Sigmoid colon (tissue), 7 donors: ENCODE measurements at regions of chr19 and their contacts with region 1.

Region 1: DNA sequence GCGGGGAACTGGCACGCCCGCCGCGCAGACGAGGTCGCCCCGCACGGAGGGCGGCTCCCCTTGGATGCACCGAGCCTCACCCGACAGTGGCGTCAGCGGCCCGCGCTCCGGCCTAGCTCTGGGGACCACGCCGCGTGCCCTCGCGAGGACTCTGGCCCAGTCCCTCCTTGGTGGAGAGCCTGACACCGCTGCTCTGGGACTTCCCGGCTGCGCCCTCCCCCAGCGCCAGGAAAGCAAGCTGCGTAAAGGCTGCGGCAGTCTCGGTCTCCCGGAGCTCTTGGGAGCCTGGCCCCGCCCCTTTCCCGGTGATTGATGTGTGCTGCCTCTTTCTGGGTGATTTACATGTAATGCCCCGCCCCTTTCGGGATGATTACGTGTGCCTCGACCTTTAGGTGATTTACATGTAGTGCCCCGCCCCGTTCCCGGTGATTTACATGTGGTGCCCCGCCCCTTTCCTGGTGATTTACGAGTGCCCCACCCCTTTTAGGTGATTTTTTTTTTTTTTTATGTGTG is at the start of gene LENG9:
- DNase-seq: peak; percentile 99
- H3K4me3 ChIP-seq: peak within 1 kb of the TSS; percentile 42 to 63 (median 60)
- H3K27ac ChIP-seq: peak within 1 kb of the TSS; percentile 89 to 94 (median 91)
- H3K4me1 ChIP-seq: peaks cover 0 to 48% (median 40%) of the 10 kb centered on the region in 4 donors
- H3K27me3 ChIP-seq: no peaks in the 10 kb centered on the region
- CTCF ChIP-seq: no peak
- EP300 ChIP-seq: no peak
- POLR2A ChIP-seq: peak; percentile 58 to 87
- total RNA-seq, gene LENG9: 2.5 to 7.8 (median 3.6) TPM

Region 2: DNA sequence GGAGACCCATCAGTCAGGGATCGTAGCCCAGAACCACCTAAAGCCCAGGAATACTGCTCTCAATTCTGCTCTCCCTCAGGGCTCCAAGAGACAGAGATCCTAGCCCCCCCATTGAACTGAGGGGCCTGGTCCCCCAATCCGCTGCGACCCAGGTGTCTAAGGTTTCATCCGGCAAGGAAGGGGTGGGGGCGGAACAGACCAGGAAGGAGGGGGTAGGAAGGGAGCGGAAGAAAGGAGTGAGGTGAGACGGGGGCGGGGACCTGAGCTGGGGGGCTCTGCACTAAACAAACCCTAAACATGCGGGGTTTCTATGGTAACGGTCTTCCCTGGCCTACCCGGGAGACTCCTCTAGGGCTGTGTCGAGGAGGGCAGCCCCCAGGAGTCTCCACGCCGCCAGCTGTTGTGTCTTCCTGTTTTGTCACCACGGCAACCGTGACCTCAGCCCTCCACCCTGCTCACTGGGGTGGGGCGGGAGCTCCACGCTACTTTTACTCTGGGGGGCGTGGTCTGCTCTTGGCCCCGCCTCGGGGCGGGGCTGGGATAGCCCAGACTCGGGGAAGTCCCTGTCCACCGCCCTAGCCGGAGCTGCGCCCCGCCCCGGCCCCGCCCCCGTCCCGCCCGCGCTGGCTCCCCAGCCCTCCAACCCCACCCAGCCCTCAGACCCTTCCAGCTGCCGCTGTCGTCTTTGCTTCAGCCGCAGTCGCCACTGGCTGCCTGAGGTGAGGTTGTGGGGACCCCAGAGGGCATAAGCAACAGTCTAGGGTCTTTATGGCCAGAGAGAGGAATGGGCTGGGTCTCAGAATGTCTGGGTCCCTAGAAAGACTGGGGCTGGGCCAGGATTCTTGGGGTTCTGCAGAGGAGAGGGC is 596.1 kb before region 1 on chr19 and contains the start of gene MYADM:
- intact Hi-C with region 1: loop called (anchors 5 kb)
- DNase-seq: peak; percentile 100
- H3K4me3 ChIP-seq: peak within 1 kb of the TSS; percentile 79 to 94 (median 92)
- H3K27ac ChIP-seq: peak within 1 kb of the TSS; percentile 94 to 98 (median 96)
- H3K4me1 ChIP-seq: peaks cover 0 to 51% (median 45%) of the 10 kb centered on the region in 4 donors
- H3K27me3 ChIP-seq: no peaks in the 10 kb centered on the region
- CTCF ChIP-seq: no peak
- EP300 ChIP-seq: peak in 2 of 4 donors; percentile 39 to 69
- POLR2A ChIP-seq: peak; percentile 86 to 96
- total RNA-seq, gene MYADM: 65.5 to 189 (median 97.3) TPM

Region 3: DNA sequence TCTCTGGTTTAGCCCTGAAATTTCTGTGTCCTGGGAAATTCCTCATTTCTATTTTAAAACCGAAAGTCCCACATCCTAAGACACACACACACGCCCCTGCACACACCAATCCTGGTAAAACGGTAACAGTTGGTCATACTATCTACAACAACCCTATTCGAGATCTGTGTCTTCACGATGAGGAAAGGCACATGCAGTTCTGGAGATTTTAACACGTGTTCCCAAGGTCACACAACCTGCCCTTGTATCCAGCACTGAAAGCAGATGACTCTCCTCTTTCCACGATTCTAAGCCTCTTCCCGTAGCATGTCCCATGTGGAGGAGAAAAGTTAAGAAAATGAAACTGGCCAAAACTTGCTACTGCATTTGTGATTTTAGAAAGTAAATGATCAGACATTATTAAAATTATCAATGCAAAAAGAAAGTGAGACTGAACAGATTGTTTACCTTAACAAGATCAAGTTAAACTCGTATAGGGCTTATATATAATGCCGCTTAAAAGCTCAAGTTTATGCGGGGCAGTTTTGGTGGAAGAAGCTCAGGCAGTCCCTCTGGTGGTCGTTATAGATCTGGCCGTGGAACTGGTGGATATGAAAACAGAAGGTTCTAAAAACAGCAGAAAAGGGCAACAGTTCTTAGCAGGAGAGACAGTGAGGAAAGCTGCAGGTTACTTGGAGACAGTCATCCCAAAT is 432.5 kb before region 1 on chr19:
- intact Hi-C with region 1: no loop called
- DNase-seq: no peak
- H3K4me3 ChIP-seq: no peak overlapping the region
- H3K27ac ChIP-seq: no peak overlapping the region
- H3K4me1 ChIP-seq: no peaks in the 10 kb centered on the region
- H3K27me3 ChIP-seq: peaks cover 0 to 48% (median 0%) of the 10 kb centered on the region in 3 donors
- CTCF ChIP-seq: no peak
- EP300 ChIP-seq: no peak
- POLR2A ChIP-seq: no peak

Region 4: GRCh38 chr19:54209811-54210494 is 253.6 kb before region 1 on chr19:
- intact Hi-C with region 1: loop called (anchors 10 kb)
- DNase-seq: peak; percentile 96
- H3K4me3 ChIP-seq: no peak overlapping the region
- H3K27ac ChIP-seq: peak overlapping the region; percentile 65 to 76 (median 76)
- H3K4me1 ChIP-seq: peaks cover 0 to 54% (median 40%) of the 10 kb centered on the region in 4 donors
- H3K27me3 ChIP-seq: no peaks in the 10 kb centered on the region
- CTCF ChIP-seq: no peak
- EP300 ChIP-seq: peak in 2 of 4 donors; percentile 24 to 28
- POLR2A ChIP-seq: no peak

Region 5: GRCh38 chr19:54448774-54449700 is 14.6 kb before region 1 on chr19 and contains the start of gene LENG8:
- intact Hi-C with region 1: loop called (anchors 1 kb)
- DNase-seq: peak; percentile 99
- H3K4me3 ChIP-seq: peak within 1 kb of the TSS; percentile 52 to 95 (median 85)
- H3K27ac ChIP-seq: peak within 1 kb of the TSS; percentile 91 to 98 (median 95)
- H3K4me1 ChIP-seq: peaks cover 0 to 51% (median 41%) of the 10 kb centered on the region in 4 donors
- H3K27me3 ChIP-seq: no peaks in the 10 kb centered on the region
- CTCF ChIP-seq: no peak
- EP300 ChIP-seq: peak in 2 of 4 donors; percentile 41 to 46
- POLR2A ChIP-seq: peak; percentile 92 to 97
- total RNA-seq, gene LENG8: 59.1 to 286 (median 107) TPM